Naive thymus-derived CD4-positive, alpha-beta T cell (primary cell): ENCODE measurements at regions of chr14 and their contacts with region 1.

Region 1: DNA sequence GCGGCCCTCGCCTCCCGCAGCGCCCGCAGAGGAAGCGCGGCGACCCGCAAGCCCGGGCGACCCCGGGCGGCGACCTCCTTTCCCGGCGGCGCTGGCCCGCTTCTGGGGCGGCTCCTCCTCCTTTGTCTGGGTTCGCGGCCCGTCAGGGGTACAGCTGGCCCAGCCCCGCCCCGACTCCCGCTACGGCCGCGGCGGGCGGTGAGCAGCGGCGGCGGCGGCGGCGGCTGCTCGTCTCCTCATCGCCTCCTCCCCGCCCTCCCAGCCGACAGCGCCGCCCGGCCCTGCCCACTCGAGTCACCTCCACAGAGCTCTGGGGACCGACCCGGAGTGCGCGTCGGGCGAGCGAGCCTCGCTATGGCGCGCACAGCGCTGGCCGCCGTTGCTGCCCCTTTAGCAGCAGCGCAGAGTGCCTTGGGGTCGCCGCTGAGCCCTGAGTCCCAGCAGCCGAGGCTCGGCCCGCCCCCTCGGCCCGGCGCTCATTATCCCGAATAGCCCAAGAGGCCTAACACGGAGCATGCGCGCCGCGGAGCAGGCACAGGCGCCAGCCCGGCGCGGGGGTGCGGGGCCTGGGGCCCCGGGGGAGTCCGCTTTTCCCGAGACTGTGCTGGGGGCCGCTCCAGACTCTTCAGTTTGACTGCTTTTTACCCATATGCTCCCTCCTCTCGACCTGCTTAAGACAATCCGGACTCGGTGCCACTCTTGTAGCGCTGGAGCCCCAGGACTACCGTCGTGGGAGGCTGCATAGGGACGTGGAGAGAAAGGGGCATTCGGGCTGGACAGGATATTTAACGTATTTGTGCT is at the start of gene SOS2:
- DNase-seq: peak; percentile 71 to 84 (median 80)
- ATAC-seq: peak; percentile 92
- H3K4me3 ChIP-seq: peak within 1 kb of the TSS; percentile 89
- H3K4me3 Mint-ChIP-seq: peak within 1 kb of the TSS; percentile 80 to 97 (median 91)
- H3K27ac ChIP-seq: peak within 1 kb of the TSS; percentile 81
- H3K27ac Mint-ChIP-seq: peak within 1 kb of the TSS; percentile 90 to 96 (median 95)
- H3K4me1 ChIP-seq: peaks cover 6 to 17% of the 10 kb centered on the region in 2 donors
- H3K4me1 Mint-ChIP-seq: peaks cover 19 to 47% (median 42%) of the 10 kb centered on the region in 7 donors
- H3K27me3 ChIP-seq: no peaks in the 10 kb centered on the region
- H3K27me3 Mint-ChIP-seq: no peaks in the 10 kb centered on the region
- total RNA-seq, gene SOS2: 19.7 to 49.6 (median 38.7) TPM

Region 2: DNA sequence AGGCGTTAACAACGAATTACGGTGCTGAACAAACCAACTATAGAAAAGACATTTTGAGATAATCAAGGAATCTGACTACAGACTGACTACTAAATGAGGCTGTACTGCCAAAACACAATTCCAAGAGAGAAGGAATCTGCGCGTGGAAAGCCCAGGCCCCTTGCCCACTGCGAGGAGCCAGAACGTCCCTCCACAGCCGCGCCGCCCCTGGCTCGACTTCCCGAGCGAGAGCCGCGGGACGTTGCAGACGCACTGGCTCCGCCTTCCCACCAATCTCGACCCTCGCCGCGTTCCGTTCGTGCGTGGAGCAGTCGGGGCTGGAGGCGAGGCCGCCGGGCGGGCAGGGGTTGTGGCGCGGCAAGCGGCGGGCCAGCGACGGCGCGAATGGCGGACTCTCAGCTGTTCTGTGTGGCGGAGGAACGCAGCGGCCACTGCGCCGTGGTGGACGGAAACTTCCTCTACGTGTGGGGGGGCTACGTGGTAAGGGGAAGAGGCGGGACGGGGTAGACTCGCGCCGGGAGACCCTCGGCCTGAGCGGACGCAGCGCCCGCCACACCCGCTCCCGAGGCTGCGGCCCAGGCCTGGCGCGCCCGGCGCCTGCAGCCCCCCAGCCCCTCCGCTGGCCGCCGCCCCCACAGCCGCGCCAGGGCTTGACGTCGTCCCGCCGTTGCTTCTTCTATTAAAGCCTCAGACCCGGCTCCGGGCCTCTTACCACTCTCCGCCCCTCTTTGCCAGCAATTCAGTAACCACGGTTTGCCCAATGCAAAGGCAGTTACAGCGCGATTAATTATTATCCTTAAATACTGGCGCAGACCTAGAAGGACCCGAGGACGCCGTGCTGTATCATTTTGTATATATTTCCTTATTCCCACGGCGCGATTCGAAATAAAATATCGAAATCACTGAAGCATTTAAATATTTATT is 538.6 kb before region 1 on chr14 and contains the start of gene KLHDC1:
- CTCF ChIA-PET with region 1: no interaction called
- POLR2A ChIA-PET with region 1: interaction called, 3 read pairs
- intact Hi-C with region 1: loop called in 1 of 2 experiments (anchors 10 kb)
- DNase-seq: peak; percentile 70 to 84 (median 80)
- ATAC-seq: peak; percentile 89
- H3K4me3 ChIP-seq: peak within 1 kb of the TSS; percentile 67
- H3K4me3 Mint-ChIP-seq: peak within 1 kb of the TSS; percentile 81 to 100 (median 89)
- H3K27ac ChIP-seq: peak within 1 kb of the TSS; percentile 80
- H3K27ac Mint-ChIP-seq: peak within 1 kb of the TSS; percentile 79 to 99 (median 94)
- H3K4me1 ChIP-seq: peaks cover 8 to 19% of the 10 kb centered on the region in 2 donors
- H3K4me1 Mint-ChIP-seq: peaks cover 20 to 52% (median 43%) of the 10 kb centered on the region in 7 donors
- H3K27me3 ChIP-seq: no peaks in the 10 kb centered on the region
- H3K27me3 Mint-ChIP-seq: no peaks in the 10 kb centered on the region
- total RNA-seq, gene KLHDC1: 2.6 to 18.0 (median 12.2) TPM

Region 3: GRCh38 chr14:49867831-49868723 is 363.6 kb before region 1 on chr14:
- CTCF ChIA-PET with region 1: no interaction called
- POLR2A ChIA-PET with region 1: interaction called, 4 read pairs
- intact Hi-C with region 1: loop called in 1 of 2 experiments (anchors 1 kb)
- DNase-seq: peak; percentile 87 to 97 (median 93)
- ATAC-seq: peak; percentile 96
- H3K4me3 ChIP-seq: peak overlapping the region; percentile 75
- H3K4me3 Mint-ChIP-seq: peak overlapping the region; percentile 79 to 95 (median 90)
- H3K27ac ChIP-seq: peak overlapping the region; percentile 91
- H3K27ac Mint-ChIP-seq: peak overlapping the region; percentile 93 to 99 (median 97)
- H3K4me1 ChIP-seq: peaks cover 31 to 35% of the 10 kb centered on the region in 2 donors
- H3K4me1 Mint-ChIP-seq: peaks cover 9 to 31% (median 17%) of the 10 kb centered on the region in 7 donors
- H3K27me3 ChIP-seq: no peaks in the 10 kb centered on the region
- H3K27me3 Mint-ChIP-seq: no peaks in the 10 kb centered on the region

Region 4: DNA sequence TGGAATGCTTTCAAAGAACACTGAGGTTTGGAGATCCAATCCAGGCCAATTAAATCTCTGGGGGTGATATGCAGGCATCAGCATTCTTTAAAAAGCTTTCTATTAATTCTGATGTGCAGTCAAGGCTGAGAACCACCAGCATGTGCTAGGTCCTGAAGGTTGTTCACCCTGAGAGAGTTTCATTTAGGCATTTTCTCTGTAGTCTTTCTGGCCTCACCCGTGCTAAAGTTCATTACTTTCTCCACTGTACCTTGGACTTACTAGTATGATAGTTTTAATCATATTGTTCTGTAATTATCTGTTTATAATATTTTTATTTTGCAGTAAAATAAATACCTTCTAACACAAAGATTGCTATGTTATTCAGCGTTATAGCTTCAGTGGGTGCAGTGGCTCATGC is 33.2 kb before region 1 on chr14:
- CTCF ChIA-PET with region 1: no interaction called
- POLR2A ChIA-PET with region 1: no interaction called
- intact Hi-C with region 1: loop called in 1 of 2 experiments (anchors 5 kb)
- DNase-seq: no peak
- ATAC-seq: no peak
- H3K4me3 ChIP-seq: no peak overlapping the region
- H3K4me3 Mint-ChIP-seq: no peak overlapping the region
- H3K27ac ChIP-seq: no peak overlapping the region
- H3K27ac Mint-ChIP-seq: no peak overlapping the region
- H3K4me1 ChIP-seq: no peaks in the 10 kb centered on the region
- H3K4me1 Mint-ChIP-seq: no peaks in the 10 kb centered on the region
- H3K27me3 ChIP-seq: no peaks in the 10 kb centered on the region
- H3K27me3 Mint-ChIP-seq: no peaks in the 10 kb centered on the region

Region 5: GRCh38 chr14:50260511-50260910 is 28.8 kb after region 1 on chr14:
- CTCF ChIA-PET with region 1: no interaction called
- POLR2A ChIA-PET with region 1: no interaction called
- intact Hi-C with region 1: loop called in 1 of 2 experiments (anchors 2 kb)
- DNase-seq: peak in 7 of 9 donors; percentile 10 to 46 (median 26)
- ATAC-seq: peak; percentile 67
- H3K4me3 ChIP-seq: no peak overlapping the region
- H3K4me3 Mint-ChIP-seq: no peak overlapping the region
- H3K27ac ChIP-seq: no peak overlapping the region
- H3K27ac Mint-ChIP-seq: peak overlapping the region in 3 of 9 donors; percentile 4 to 16 (median 8)
- H3K4me1 ChIP-seq: no peaks in the 10 kb centered on the region
- H3K4me1 Mint-ChIP-seq: peaks cover 0 to 8% (median 0%) of the 10 kb centered on the region in 7 donors
- H3K27me3 ChIP-seq: no peaks in the 10 kb centered on the region
- H3K27me3 Mint-ChIP-seq: no peaks in the 10 kb centered on the region

Region 6: GRCh38 chr14:50667996-50668825 is 436.5 kb after region 1 on chr14 and contains the start of gene SAV1:
- CTCF ChIA-PET with region 1: no interaction called
- POLR2A ChIA-PET with region 1: no interaction called
- intact Hi-C with region 1: loop called in 1 of 2 experiments (anchors 1 kb)
- DNase-seq: peak; percentile 18 to 65 (median 35)
- ATAC-seq: peak; percentile 59
- H3K4me3 ChIP-seq: peak within 1 kb of the TSS; percentile 84
- H3K4me3 Mint-ChIP-seq: peak within 1 kb of the TSS in 2 of 10 donors; percentile 92 to 95
- H3K27ac ChIP-seq: peak within 1 kb of the TSS; percentile 65
- H3K27ac Mint-ChIP-seq: peak within 1 kb of the TSS in 6 of 9 donors; percentile 54 to 94 (median 88)
- H3K4me1 ChIP-seq: peaks cover 0 to 10% of the 10 kb centered on the region in 2 donors
- H3K4me1 Mint-ChIP-seq: peaks cover 11 to 23% (median 20%) of the 10 kb centered on the region in 7 donors
- H3K27me3 ChIP-seq: no peaks in the 10 kb centered on the region
- H3K27me3 Mint-ChIP-seq: peaks cover 0 to 7% (median 0%) of the 10 kb centered on the region in 5 donors
- total RNA-seq, gene SAV1: 7.2 to 9.4 (median 8.7) TPM